Activated CD4-positive, alpha-beta memory T cell treated with anti-CD3 and anti-CD28 coated beads for 36 hours (primary cell): ENCODE measurements at regions of chr3 and their contacts with region 1.

Region 1: DNA sequence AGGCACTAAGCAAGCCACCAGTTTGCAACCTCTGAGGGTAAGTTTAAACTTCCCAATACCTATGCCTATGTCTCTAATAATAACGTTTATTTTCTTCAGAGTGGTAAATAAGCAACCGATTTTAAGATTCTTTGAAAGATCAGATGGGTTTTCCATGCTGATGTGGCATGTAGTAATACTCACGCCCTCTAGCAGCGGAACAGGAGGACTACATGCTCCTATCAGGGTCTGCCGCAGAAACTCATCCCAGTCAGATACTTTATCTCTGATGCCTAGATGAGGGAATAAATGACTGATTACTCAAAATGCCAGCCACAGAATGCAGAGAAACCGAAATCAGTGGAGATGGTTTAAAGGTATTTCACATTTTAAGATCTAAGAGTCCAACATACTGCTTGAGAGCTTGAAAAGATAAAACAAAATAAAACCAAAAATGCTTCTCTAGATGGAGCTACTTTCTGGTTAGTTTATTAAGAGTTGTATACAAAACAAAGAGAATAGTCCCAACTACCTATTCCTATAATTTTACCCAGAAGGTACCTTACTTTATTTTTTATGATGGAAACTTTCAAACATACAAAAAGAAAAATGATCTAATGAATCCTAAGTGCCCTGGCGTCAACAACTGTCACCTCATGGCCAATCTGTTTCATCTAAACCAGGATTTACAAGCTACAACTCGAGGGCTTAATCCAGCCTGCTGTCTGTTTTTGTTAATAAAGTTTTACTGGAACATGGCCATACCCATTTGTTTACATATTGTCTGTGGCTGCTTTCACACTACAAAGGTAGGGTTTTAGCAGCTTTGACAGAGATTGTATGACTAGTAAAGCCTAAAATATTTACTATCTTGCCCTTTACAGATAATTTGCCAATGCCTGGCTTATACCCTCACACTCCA is 37.5 kb upstream of the STIMATE start:
- DNase-seq: peak; percentile 73
- H3K4me3 Mint-ChIP-seq: no peak overlapping the region
- H3K27ac Mint-ChIP-seq: no peak overlapping the region
- H3K4me1 Mint-ChIP-seq: peaks cover 10% of the 10 kb centered on the region
- H3K27me3 Mint-ChIP-seq: no peaks in the 10 kb centered on the region

Region 2: DNA sequence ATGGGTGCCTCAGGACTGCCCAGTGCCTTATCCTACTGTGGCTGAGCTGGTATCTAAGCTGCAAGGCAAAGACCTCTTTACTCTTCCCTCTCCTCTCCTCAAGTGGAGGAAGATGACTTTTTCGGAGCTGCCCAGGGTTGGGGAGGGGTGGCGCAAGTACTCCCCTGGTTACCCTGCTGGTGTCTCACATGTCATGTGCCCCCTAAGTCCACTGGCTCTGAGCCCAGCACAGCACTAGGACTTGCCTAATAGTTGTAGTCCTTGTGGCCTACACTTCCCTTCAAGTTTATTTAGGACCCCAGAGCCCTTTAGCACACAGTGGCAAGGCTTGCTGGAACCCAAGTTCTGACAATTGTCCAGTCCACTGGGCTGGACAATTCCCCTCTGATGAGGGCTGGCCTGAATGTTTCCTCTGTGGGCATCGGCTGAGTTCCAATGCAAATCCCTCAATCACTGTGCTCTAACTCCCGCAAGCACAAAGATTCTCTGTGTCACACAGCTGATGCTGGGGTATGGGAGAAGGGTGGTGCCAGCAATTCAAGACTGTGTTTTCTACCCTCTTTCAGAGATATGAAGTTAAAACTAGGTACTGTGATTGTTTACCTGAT is 338.1 kb before region 1 on chr3:
- CTCF ChIA-PET with region 1: no interaction called
- POLR2A ChIA-PET with region 1: no interaction called
- intact Hi-C with region 1: no loop called
- DNase-seq: no peak
- H3K4me3 Mint-ChIP-seq: no peak overlapping the region
- H3K27ac Mint-ChIP-seq: no peak overlapping the region
- H3K4me1 Mint-ChIP-seq: no peaks in the 10 kb centered on the region
- H3K27me3 Mint-ChIP-seq: no peaks in the 10 kb centered on the region

Region 3: DNA sequence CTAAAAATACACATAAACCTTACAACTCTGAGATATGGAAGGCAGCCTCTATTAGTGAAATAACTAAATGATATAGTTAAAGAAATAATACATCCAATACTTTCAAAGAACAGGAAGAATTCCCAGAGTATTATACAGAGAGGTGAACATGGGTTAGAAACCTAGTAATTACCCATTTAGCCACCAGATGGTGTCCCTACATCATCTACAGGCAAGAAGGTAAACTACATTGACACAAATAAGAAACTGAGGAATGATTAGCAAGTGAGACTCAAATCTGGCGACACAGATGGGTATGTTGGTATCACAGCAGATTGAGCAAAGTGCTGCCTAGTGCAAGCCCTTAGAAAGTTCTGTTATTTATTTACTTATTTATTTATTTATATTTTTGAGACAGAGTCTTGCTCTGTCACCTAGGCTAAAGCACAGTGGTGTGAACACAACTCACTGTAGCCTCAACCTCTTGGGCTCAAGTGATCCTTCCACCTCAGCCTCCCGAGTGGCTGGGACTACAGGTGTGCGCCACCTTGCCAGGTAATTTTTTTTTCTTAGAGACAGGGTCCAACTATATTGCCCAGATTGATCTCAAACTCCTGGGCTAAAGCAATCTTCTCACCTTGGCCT is 192.3 kb before region 1 on chr3:
- CTCF ChIA-PET with region 1: interaction called, 4 read pairs
- POLR2A ChIA-PET with region 1: no interaction called
- intact Hi-C with region 1: loop called (anchors 2 kb)
- DNase-seq: no peak
- H3K4me3 Mint-ChIP-seq: no peak overlapping the region
- H3K27ac Mint-ChIP-seq: no peak overlapping the region
- H3K4me1 Mint-ChIP-seq: no peaks in the 10 kb centered on the region
- H3K27me3 Mint-ChIP-seq: no peaks in the 10 kb centered on the region

Region 4: GRCh38 chr3:52845691-52846431 is 89.0 kb before region 1 on chr3:
- CTCF ChIA-PET with region 1: interaction called, 11 read pairs
- POLR2A ChIA-PET with region 1: no interaction called
- intact Hi-C with region 1: loop called (anchors 1 kb)
- DNase-seq: peak; percentile 15
- H3K4me3 Mint-ChIP-seq: no peak overlapping the region
- H3K27ac Mint-ChIP-seq: no peak overlapping the region
- H3K4me1 Mint-ChIP-seq: no peaks in the 10 kb centered on the region
- H3K27me3 Mint-ChIP-seq: no peaks in the 10 kb centered on the region

Region 5: GRCh38 chr3:52851348-52851747 is 83.5 kb before region 1 on chr3:
- CTCF ChIA-PET with region 1: interaction called, 11 read pairs
- POLR2A ChIA-PET with region 1: no interaction called
- intact Hi-C with region 1: loop called (anchors 1 kb)
- DNase-seq: peak; percentile 51
- H3K4me3 Mint-ChIP-seq: no peak overlapping the region
- H3K27ac Mint-ChIP-seq: no peak overlapping the region
- H3K4me1 Mint-ChIP-seq: no peaks in the 10 kb centered on the region
- H3K27me3 Mint-ChIP-seq: no peaks in the 10 kb centered on the region

Region 6: DNA sequence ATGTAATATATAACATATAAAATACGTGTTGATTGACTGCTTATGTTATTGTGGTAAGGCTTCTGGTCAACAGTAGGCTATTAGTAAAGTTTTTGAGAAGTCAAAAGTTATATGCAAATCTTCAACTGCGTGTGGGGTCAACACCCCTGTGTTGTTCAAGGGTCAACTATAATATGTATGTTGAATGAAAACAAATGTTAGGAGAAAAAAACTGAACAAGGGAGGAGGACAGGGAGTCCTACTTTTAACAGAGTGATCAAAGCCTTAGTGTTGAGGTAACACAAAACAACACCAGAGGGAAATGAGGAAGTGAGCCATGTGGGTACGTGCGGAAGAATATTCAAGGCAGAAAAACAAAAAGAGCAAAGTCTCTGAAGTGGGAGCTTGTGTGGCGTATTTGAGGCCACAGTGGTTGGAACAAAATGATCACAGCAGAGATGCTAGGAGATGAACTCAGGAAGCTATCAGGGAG is 48.5 kb after region 1 on chr3:
- CTCF ChIA-PET with region 1: interaction called, 10 read pairs
- POLR2A ChIA-PET with region 1: interaction called, 5 read pairs
- intact Hi-C with region 1: loop called (anchors 1 kb)
- DNase-seq: peak; percentile 86
- H3K4me3 Mint-ChIP-seq: peak overlapping the region; percentile 16
- H3K27ac Mint-ChIP-seq: peak overlapping the region; percentile 72
- H3K4me1 Mint-ChIP-seq: peaks cover 38% of the 10 kb centered on the region
- H3K27me3 Mint-ChIP-seq: no peaks in the 10 kb centered on the region

Region 7: GRCh38 chr3:53056442-53056841 is 121.6 kb after region 1 on chr3:
- CTCF ChIA-PET with region 1: no interaction called
- POLR2A ChIA-PET with region 1: no interaction called
- intact Hi-C with region 1: no loop called
- DNase-seq: no peak
- H3K4me3 Mint-ChIP-seq: no peak overlapping the region
- H3K27ac Mint-ChIP-seq: no peak overlapping the region
- H3K4me1 Mint-ChIP-seq: no peaks in the 10 kb centered on the region
- H3K27me3 Mint-ChIP-seq: no peaks in the 10 kb centered on the region

Region 8: GRCh38 chr3:53072653-53073552 is 138.0 kb after region 1 on chr3:
- CTCF ChIA-PET with region 1: interaction called, 11 read pairs
- POLR2A ChIA-PET with region 1: no interaction called
- intact Hi-C with region 1: loop called (anchors 2 kb)
- DNase-seq: peak; percentile 94
- H3K4me3 Mint-ChIP-seq: peak overlapping the region; percentile 82
- H3K27ac Mint-ChIP-seq: peak overlapping the region; percentile 85
- H3K4me1 Mint-ChIP-seq: peaks cover 12% of the 10 kb centered on the region
- H3K27me3 Mint-ChIP-seq: no peaks in the 10 kb centered on the region